Activated CD8-positive, alpha-beta T cell treated with anti-CD3 and anti-CD28 coated beads, Interleukin-2, amount 10 ng/mL, durations not matched to agents 7 days and 5 days (primary cell): ENCODE measurements at regions of chr11 and their contacts with region 1.

Region 1: DNA sequence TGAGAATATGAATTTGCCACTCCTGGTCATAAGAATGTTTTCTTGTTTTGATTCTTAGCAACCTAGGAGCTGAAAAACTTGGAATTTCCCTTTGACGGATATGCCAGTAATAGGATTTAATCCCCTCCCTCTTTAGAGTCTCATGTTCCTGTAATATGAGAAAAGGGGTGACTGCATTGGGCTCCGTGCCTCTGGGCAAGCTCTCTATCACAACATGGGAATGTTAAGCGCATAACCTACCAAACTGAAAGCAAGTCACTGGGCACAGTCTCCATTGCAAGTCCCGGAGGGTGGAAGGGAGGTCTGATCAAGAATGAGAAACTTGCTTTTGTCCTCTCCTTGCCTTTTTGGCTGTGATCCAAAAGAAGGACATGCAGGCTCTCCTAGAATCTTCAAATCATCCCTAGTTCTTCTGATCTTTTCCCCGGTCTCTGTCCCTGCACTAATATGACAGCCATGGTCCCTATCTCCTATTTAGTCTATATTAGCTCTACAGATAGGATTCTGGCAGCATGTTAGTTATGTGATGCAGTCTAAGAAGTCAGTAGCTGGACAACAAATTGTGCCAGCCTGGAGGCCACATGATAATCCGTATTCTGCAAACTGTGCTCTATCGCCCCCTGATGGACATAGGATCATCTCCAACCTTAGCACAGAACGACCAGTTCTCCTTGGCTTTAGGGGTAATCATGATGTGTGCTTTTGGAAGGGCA is 11.7 kb downstream of the OR10D3 start:
- DNase-seq: peak; percentile 63
- ATAC-seq: peak; percentile 88
- H3K4me3 Mint-ChIP-seq: no peak overlapping the region
- H3K27ac Mint-ChIP-seq: no peak overlapping the region
- H3K4me1 Mint-ChIP-seq: no peaks in the 10 kb centered on the region
- H3K27me3 Mint-ChIP-seq: peaks cover 13% of the 10 kb centered on the region

Region 2: DNA sequence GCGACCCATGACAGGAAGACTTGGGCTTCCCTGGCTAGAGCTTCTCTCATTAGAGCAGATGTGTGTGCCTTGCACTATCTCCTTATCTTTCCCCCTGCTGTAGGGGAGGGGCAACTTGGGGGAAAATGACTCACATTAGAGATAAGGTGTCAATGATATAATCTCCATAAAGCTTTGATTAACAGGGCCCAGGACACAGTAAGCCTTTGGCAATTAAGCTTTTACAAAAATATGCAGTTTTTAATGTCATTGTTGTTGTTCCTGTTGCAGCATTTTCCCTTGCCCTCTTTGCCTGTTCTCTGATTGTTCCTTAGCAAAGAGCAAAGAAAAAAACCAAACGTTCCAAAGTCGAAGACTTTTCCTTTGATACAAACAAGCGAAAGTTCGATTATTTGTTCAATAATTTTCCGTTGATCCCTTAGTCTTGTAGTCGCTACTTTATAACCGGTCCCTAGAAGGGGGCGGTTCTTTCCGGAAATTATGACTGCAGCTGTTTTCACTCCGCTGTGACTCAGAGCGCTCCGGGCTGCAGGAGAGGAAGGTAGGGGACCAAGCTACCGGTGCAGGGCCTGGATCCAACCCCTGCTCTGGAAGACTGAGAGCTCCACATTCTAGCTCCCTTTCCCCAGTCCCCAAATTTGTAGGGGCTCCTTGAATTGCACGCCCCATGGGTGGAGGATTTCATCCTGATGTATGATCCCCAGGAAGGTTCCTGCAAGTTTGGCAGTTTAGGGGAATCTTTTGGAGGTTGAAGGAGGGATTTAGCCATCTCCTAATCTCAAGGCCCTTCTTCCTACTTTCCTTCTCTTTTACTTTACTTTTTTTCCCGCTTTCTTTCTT is 79.7 kb before region 1 on chr11 and contains the start of gene VWA5A:
- CTCF ChIA-PET with region 1: interaction called, 11 read pairs
- POLR2A ChIA-PET with region 1: no interaction called
- DNase-seq: peak; percentile 85
- ATAC-seq: peak; percentile 99
- H3K4me3 Mint-ChIP-seq: peak within 1 kb of the TSS; percentile 85
- H3K27ac Mint-ChIP-seq: peak within 1 kb of the TSS; percentile 71
- H3K4me1 Mint-ChIP-seq: peaks cover 20% of the 10 kb centered on the region
- H3K27me3 Mint-ChIP-seq: peaks cover 4% of the 10 kb centered on the region
- total RNA-seq, gene VWA5A: 3.3 to 3.8 TPM

Region 3: GRCh38 chr11:124219126-124219525 is 24.3 kb after region 1 on chr11:
- CTCF ChIA-PET with region 1: no interaction called
- POLR2A ChIA-PET with region 1: no interaction called
- DNase-seq: no peak
- ATAC-seq: no peak
- H3K4me3 Mint-ChIP-seq: no peak overlapping the region
- H3K27ac Mint-ChIP-seq: no peak overlapping the region
- H3K4me1 Mint-ChIP-seq: no peaks in the 10 kb centered on the region
- H3K27me3 Mint-ChIP-seq: no peaks in the 10 kb centered on the region